ENCODE measurements at regions of chr2 and their contacts with region 1.

Region 1: DNA sequence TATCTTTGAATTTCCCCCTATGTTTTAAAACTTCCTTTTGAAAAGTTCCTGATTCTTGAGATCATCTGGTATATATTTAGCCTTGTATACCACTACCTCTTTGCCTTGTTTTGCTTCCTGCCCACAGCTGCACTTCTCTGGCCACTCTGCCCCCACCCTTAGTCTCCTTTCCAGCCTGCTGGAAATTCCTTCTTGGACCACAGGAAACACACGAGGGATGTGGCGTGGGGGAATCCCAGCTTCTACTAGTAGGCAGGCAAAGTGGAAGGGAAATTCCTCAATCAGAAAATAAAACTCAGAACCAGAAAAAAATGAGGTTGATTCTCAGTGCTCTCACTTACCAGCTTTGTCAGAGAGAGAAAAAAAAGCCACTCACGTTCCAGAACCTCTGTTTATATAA is 13.4 kb downstream of the IL18RAP start:
- DNase-seq: no peak
- CTCF ChIP-seq: no peak

Region 2: DNA sequence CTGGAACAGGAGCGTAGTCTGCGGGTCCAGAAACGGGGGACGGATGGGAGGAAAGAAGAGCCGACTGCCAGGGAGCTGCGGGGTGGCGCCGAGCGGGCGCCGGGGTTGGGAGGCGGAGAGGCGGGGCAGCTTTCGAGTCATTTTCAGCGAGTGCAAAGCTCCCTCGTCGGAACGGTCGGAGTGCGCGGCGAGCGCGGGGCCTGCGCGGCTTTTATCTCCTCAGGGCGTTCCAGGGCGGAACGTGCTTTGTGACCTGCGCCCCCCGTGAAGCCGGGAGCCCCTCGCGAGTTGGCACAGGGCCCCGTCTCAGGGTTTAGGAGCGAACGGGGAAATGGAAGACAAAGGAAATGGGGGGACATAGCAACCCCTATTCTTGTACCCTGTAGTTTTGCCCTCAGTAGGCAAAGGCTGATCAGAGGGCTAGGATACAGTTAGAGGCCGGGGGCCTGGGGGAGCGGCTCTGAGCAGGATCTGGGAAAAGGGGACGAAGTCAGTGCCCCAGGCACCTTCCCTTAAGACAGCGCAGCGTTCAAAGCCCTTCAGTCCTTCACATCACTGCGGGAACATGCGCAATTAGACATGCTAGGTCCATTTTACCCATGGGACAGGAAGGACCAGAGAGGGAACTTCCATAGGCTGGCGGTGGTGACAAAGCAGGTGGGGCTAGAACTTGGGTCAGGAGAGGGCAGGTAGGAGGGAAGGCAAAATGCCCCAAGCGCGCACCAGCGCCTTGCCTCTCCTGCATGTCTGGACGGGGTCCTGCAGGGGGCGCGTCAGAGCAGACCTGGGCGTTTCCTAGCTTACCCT is 185.1 kb before region 1 on chr2:
- in situ Hi-C with region 1: loop called (anchors 10 kb)
- DNase-seq: peak; percentile 81
- CTCF ChIP-seq: peak; percentile 80